Caco-2 (cell line): ENCODE measurements at regions of chr1 and their contacts with region 1.

Region 1: GRCh38 chr1:16621300-16621658 is 7.9 kb upstream of the NBPF1 start:
- DNase-seq: no peak
- H3K4me3 ChIP-seq: no peak overlapping the region
- H3K4me3 Mint-ChIP-seq: no peak overlapping the region
- H3K27ac Mint-ChIP-seq: no peak overlapping the region
- H3K4me1 ChIP-seq: 0 out of 2 replicates have a peak, but pooled peaks cover 3% of the 10 kb centered on the region
- H3K4me1 Mint-ChIP-seq: no peaks in the 10 kb centered on the region
- H3K27me3 ChIP-seq: no peaks in the 10 kb centered on the region
- H3K27me3 Mint-ChIP-seq: no peaks in the 10 kb centered on the region
- CTCF ChIP-seq: no peak

Region 2: DNA sequence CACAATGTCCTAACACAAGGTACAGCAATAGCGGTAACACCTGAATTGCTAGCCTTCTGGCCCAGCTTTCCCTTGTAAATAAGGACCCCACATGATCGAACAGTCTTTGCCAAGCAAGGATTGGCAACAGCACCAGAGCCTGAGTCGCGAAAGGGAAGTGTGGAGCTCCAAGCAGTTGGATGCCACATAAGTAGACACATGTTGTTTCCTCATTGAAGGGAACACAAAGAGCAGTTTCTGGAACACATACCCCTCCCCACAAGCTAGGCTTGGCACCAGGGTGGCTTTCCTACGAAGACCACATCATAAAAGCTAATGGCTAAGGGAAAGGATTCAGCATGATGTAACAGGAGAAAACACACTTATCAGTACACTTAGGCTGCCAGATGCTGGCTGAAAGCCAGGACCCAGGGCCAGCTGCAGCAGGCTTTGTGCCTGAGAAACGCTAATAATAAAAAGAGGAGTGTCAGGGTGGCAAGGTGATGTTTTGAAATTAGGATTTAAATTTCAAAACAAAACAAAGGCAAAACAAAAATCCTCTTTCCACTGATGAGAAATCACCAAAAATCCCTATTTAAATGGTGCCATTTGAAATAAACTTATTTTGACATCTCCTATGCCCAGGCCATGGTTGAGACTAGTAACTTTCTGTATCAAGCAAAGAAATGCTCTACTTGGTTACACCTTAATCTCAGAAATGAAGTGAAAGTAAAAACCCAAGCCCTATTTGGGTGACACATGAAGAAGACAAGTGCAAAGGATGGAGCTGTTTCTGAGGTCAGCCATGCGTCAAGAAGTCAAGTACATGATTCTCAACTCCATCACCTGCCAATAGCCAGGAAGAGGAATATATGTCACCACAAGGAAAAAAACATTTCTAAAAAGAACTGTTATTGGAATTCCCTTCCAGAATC is 372.4 kb before region 1 on chr1:
- CTCF ChIA-PET with region 1: no interaction called
- POLR2A ChIA-PET with region 1: no interaction called
- intact Hi-C with region 1: no loop called
- DNase-seq: no peak
- H3K4me3 ChIP-seq: no peak overlapping the region
- H3K4me3 Mint-ChIP-seq: no peak overlapping the region
- H3K27ac Mint-ChIP-seq: no peak overlapping the region
- H3K4me1 ChIP-seq: no peaks in the 10 kb centered on the region
- H3K4me1 Mint-ChIP-seq: no peaks in the 10 kb centered on the region
- H3K27me3 ChIP-seq: no peaks in the 10 kb centered on the region
- H3K27me3 Mint-ChIP-seq: no peaks in the 10 kb centered on the region
- CTCF ChIP-seq: no peak

Region 3: DNA sequence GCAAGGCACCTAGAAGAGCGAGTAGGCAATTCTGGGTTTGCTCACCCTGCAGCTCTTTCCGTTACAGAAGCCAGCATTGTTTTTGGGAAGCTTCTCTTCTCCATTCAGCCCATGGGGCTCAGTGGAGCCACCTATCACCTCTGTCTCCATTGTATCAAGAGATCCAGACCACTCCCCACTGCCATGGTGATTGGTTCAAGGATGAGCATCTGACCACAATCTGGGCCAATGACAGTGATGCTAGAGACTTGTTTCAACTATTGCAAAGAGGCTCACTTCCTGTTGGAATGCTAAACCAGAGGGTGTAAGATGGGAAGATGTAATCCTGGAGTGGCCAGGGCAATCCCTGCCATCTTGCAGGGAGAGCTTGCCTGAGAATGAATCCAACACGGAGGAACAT is 190.7 kb before region 1 on chr1:
- CTCF ChIA-PET with region 1: no interaction called
- POLR2A ChIA-PET with region 1: no interaction called
- intact Hi-C with region 1: no loop called
- DNase-seq: peak; percentile 15 to 36
- H3K4me3 ChIP-seq: no peak overlapping the region
- H3K4me3 Mint-ChIP-seq: no peak overlapping the region
- H3K27ac Mint-ChIP-seq: no peak overlapping the region
- H3K4me1 ChIP-seq: no peaks in the 10 kb centered on the region
- H3K4me1 Mint-ChIP-seq: no peaks in the 10 kb centered on the region
- H3K27me3 ChIP-seq: no peaks in the 10 kb centered on the region
- H3K27me3 Mint-ChIP-seq: peaks cover 4% of the 10 kb centered on the region
- CTCF ChIP-seq: no peak

Region 4: GRCh38 chr1:16904560-16905111 is 283.4 kb after region 1 on chr1:
- CTCF ChIA-PET with region 1: interaction called, 4 read pairs
- POLR2A ChIA-PET with region 1: no interaction called
- intact Hi-C with region 1: loop called (anchors 2 kb)
- DNase-seq: peak; percentile 99
- H3K4me3 ChIP-seq: peak overlapping the region; percentile 53
- H3K4me3 Mint-ChIP-seq: no peak overlapping the region
- H3K27ac Mint-ChIP-seq: no peak overlapping the region
- H3K4me1 ChIP-seq: 0 out of 2 replicates have a peak, but pooled peaks cover 4% of the 10 kb centered on the region
- H3K4me1 Mint-ChIP-seq: peaks cover 13% of the 10 kb centered on the region
- H3K27me3 ChIP-seq: no peaks in the 10 kb centered on the region
- H3K27me3 Mint-ChIP-seq: no peaks in the 10 kb centered on the region
- CTCF ChIP-seq: no peak

Region 5: DNA sequence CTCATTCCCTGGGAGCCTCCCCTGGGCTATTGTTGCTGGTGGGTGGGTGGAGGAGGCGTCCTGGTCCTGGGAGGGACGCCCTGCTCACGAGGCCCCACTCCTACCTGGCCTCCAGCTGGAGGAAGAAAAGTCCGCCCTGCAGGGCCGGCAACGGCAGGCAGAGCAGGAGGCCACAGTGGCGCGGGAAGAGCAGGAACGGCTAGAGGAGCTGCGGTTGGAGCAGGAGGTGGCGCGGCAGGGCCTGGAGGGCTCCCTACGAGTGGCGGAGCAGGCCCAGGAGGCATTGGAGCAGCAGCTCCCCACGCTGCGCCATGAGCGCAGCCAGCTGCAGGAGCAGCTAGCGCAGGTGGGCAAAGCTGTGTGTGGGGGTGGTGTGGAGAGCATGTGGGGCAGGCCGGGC is 325.4 kb after region 1 on chr1:
- CTCF ChIA-PET with region 1: interaction called, 14 read pairs
- POLR2A ChIA-PET with region 1: no interaction called
- intact Hi-C with region 1: no loop called
- DNase-seq: no peak
- H3K4me3 ChIP-seq: no peak overlapping the region
- H3K4me3 Mint-ChIP-seq: no peak overlapping the region
- H3K27ac Mint-ChIP-seq: no peak overlapping the region
- H3K4me1 ChIP-seq: no peaks in the 10 kb centered on the region
- H3K4me1 Mint-ChIP-seq: no peaks in the 10 kb centered on the region
- H3K27me3 ChIP-seq: no peaks in the 10 kb centered on the region
- H3K27me3 Mint-ChIP-seq: no peaks in the 10 kb centered on the region
- CTCF ChIP-seq: no peak